Activated CD4-positive, alpha-beta T cell treated with anti-CD3 and anti-CD28 coated beads, Interleukin-2, amount 10 ng/mL, durations not matched to agents 24 days and 14 days (primary cell): ENCODE measurements at regions of chr9 and their contacts with region 1.

Region 1: DNA sequence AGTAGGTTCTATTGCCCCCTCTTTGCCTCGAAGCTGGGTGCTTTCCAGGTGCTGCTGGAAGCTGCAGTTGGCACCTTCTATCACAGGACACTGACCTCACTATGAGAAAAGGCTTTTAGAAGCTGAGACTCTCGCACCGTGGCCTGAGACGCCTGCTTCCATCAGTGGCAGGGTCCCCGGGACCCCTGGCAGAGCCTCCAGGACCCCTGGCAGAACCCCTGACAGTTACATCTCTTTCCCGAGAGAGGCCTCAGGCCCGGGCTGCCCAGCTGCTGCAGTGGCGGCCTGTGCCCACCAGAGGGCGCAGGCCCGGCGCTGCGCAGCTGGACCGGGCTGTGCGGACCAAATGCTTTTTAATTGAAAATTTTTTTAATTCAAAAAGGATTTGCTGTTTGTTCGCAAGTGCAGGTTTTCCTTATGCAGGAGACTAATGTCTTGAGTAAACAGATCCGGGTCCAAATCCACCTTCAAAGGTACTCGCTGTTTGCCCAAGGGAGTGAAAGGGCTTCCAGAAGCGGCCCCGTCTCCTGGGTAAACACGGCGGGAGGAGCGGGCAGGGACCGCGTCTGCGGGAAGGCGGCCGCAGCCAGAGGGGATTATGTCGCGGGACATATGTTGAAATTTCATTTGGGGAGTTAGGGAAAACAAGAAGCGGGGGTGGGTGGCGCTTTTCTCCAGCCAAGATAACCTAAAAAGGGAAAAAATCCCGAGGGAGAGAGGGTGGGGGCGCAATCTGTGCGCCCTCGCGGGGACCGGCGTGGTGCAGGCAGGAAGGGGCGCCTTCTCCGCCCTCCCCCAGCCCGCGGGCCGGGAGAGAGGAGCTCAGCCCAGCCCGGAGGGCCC is 114.4 kb upstream of the LMX1B start:
- DNase-seq: peak; percentile 82
- H3K4me3 Mint-ChIP-seq: peak overlapping the region; percentile 57
- H3K27ac Mint-ChIP-seq: no peak overlapping the region
- H3K4me1 Mint-ChIP-seq: peaks cover 2% of the 10 kb centered on the region
- H3K27me3 Mint-ChIP-seq: peaks cover 14% of the 10 kb centered on the region

Region 2: DNA sequence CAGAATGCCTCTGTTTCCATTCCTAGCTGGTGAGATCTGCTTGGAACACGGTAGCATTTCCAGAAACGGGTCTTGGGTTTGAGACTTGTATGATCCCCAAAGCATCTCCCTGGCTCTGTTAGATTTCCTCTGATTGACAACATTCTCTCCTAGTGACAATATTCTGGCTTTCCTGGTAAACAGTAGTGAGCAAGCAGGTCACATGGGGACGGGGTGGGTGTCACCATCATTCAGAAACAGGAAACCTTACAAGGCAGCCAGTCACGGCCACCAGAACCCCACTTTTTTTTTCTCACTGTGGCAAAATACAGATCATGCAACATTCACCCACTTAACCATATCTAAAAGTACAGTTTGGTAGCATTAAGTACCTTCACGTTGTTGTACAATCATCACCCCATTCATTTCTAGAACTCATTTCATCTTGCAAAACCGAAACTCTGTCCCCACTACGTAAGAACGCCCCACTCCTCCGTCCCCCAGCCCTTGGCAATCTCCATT is 24.4 kb after region 1 on chr9:
- intact Hi-C with region 1: no loop called
- DNase-seq: peak; percentile 70
- H3K4me3 Mint-ChIP-seq: peak overlapping the region; percentile 3
- H3K27ac Mint-ChIP-seq: no peak overlapping the region
- H3K4me1 Mint-ChIP-seq: peaks cover 10% of the 10 kb centered on the region
- H3K27me3 Mint-ChIP-seq: peaks cover 56% of the 10 kb centered on the region

Region 3: GRCh38 chr9:126558051-126558665 is 58.9 kb after region 1 on chr9:
- intact Hi-C with region 1: loop called (anchors 1 kb)
- DNase-seq: peak; percentile 90
- H3K4me3 Mint-ChIP-seq: no peak overlapping the region
- H3K27ac Mint-ChIP-seq: no peak overlapping the region
- H3K4me1 Mint-ChIP-seq: no peaks in the 10 kb centered on the region
- H3K27me3 Mint-ChIP-seq: peaks cover 19% of the 10 kb centered on the region